ENCODE measurements at regions of chr1 and their contacts with region 1.

Region 1: GRCh38 chr1:58783993-58784757 is at the start of gene JUN:
- DNase-seq: peak; percentile 99
- H3K4me3 Mint-ChIP-seq: peak within 1 kb of the TSS; percentile 89
- H3K27ac Mint-ChIP-seq: peak within 1 kb of the TSS; percentile 96
- H3K4me1 Mint-ChIP-seq: peaks cover 21% of the 10 kb centered on the region
- H3K27me3 Mint-ChIP-seq: peaks cover 15% of the 10 kb centered on the region
- total RNA-seq, gene JUN: 31.1 to 32.3 TPM

Region 2: DNA sequence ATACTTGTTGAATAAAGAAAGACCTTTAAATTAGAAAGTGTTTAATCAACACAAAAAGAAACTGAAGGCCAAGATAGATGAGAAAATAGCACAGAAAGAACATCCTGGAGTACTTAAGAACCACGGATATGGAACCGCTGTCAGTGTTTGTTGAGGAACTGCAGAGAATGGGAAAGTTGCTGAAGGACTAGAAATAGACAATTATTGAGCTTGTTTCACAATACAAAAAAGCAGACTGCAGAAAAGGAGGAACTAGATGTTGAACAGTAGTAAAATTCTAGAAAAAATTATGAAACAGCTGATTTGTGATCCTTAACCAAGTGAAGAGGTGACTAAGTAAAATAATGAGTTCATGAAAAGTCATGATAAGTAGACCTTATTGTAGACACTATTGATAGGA is 114.0 kb before region 1 on chr1:
- CTCF ChIA-PET with region 1: no interaction called
- POLR2A ChIA-PET with region 1: no interaction called
- DNase-seq: no peak
- H3K4me3 Mint-ChIP-seq: no peak overlapping the region
- H3K27ac Mint-ChIP-seq: no peak overlapping the region
- H3K4me1 Mint-ChIP-seq: no peaks in the 10 kb centered on the region
- H3K27me3 Mint-ChIP-seq: no peaks in the 10 kb centered on the region

Region 3: DNA sequence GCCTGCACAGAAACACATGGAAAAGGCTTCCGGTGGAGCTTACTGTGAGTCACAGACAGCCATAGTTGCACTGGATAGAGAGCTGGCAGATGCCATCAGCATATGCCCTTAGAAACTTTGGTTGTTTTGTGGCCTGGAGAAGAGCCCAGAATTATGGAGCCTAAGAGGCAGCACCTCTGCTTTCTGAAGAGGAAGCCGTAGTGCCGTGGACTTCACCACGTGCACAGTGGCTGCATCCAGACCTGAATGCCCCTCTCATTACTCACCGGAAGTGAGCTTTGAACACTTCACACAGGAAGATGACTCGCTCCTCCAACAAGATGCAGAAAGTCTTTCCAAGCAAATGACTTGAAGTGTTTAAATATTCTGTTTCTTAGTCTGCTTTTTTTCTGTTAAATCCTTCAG is 28.7 kb before region 1 on chr1:
- CTCF ChIA-PET with region 1: interaction called, 6 read pairs
- POLR2A ChIA-PET with region 1: interaction called, 39 read pairs
- DNase-seq: peak; percentile 72
- H3K4me3 Mint-ChIP-seq: peak overlapping the region; percentile 22
- H3K27ac Mint-ChIP-seq: peak overlapping the region; percentile 84
- H3K4me1 Mint-ChIP-seq: peaks cover 55% of the 10 kb centered on the region
- H3K27me3 Mint-ChIP-seq: no peaks in the 10 kb centered on the region

Region 4: DNA sequence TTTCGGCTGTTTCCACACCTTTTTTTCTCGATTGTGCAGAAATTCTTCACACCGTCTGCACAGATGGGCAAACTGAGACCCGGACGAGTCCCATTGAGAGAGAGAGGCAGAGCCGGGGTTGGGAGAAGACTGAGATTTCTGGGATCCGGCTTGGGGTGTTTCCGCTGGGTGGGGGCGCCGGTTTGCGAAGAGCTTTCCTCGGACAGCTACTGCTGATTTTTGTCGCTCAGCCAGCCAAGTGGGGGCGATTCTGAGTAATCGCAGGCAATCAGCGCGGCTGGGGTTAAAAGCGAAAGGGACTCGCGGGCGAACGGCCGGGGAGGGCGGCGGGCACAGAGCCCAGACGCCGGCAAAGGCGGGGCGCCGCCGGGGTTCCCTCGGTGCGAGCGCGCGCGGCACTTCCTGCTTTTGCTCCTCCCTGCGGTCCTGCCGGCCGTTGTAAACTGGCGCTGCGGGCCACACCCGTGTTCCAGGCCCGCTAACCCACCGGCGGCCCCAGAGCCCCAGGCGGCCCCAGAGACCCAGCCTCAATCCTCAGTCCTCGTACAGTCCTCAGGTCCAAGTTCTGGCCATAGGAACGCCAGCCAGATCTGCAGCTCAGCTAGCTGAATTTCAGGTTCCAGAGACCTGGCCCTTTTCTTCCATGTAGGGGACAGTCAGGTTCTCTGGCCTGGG is 32.0 kb after region 1 on chr1:
- CTCF ChIA-PET with region 1: interaction called, 6 read pairs
- POLR2A ChIA-PET with region 1: interaction called, 34 read pairs
- DNase-seq: peak; percentile 91
- H3K4me3 Mint-ChIP-seq: peak overlapping the region; percentile 83
- H3K27ac Mint-ChIP-seq: peak overlapping the region; percentile 78
- H3K4me1 Mint-ChIP-seq: peaks cover 45% of the 10 kb centered on the region
- H3K27me3 Mint-ChIP-seq: peaks cover 6% of the 10 kb centered on the region

Region 5: DNA sequence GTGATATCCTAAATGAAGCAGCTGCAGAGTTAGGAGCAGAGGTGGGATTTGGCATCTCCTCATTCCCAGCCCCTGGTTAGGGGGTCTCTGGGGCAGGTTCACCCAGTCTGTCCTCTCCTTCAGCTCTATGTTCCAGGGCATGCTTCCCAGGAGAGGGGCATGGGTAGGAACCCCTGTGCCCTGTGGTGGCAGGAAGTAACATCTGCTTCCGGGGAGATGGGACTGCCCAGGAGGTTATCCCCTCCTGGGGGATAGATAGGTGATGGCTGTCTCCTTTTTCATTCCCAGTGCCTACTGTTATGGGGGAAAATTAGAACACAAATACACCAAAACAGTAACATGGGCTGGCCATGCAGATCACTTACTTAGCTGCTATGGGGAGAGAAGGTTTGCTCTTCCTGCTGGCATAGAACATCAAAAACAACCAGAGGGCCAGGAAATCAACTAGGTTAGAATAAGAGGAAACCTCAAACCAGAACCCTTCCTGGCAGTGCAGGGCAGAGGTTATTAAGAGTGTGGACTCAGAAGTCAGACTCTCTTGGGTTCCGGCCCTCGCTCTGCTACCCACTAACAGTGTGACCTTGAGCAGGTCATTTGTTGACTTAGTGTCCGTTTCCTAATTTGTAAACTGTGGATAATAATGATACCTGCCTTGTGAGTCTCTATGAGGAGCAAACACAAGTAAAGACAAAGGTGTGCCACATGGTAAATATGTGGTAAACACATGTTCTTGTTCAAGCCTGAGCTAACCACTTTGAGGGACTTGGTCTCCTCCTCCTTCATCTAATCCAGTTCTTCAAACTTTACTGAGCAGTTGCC is 157.5 kb after region 1 on chr1:
- CTCF ChIA-PET with region 1: interaction called, 5 read pairs
- POLR2A ChIA-PET with region 1: interaction called, 26 read pairs
- DNase-seq: peak; percentile 71
- H3K4me3 Mint-ChIP-seq: peak overlapping the region; percentile 42
- H3K27ac Mint-ChIP-seq: peak overlapping the region; percentile 83
- H3K4me1 Mint-ChIP-seq: peaks cover 59% of the 10 kb centered on the region
- H3K27me3 Mint-ChIP-seq: peaks cover 4% of the 10 kb centered on the region

Region 6: DNA sequence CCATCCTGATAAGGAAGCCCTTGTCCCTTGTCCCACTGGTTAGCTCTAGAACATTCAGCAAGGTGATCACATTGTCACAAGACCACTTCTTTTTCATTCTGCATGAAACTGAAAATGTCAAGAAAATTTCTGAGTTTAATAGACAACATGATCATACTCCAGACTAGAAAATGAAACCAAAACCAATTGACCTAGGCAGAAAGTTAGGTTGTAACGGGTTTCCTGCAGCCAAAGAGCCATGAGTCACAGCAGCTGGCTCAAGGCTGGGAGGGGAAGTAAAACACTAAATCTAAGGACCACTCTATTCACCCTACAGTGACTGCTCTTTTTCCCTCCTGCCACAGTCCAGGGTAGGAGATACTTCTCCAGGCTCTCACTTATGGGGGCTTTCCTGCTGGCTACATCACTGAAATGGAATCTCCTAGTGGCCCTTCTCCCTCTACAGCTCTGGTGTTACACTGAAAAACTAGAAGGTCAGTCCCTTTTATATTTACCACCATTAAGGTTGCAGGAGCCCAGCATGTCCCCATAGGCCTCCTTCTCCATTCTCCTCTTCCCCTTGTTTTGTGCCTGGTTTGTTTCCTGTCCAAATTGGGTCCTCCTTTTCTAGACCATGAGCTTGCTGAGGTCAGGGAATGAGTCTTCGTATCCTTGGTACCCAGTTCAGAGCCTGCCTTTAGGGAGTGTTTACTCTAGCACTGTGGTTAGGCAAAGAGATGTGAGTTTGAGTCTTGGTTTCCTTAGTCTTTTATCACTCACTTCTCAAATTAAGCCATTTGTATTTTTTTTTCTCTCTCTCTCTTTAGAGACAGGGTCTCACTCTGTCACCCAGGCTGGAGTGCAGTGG is 236.2 kb after region 1 on chr1:
- CTCF ChIA-PET with region 1: interaction called, 8 read pairs
- POLR2A ChIA-PET with region 1: interaction called, 16 read pairs
- DNase-seq: peak; percentile 63
- H3K4me3 Mint-ChIP-seq: peak overlapping the region; percentile 70
- H3K27ac Mint-ChIP-seq: peak overlapping the region; percentile 97
- H3K4me1 Mint-ChIP-seq: peaks cover 42% of the 10 kb centered on the region
- H3K27me3 Mint-ChIP-seq: no peaks in the 10 kb centered on the region